PC-9 (cell line): ENCODE measurements at regions of chr2 and their contacts with region 1.

Region 1: GRCh38 chr2:174263989-174264388 is 15.7 kb upstream of the OLA1 start:
- DNase-seq: peak; percentile 52 to 92
- H3K4me3 ChIP-seq: no peak overlapping the region
- H3K27ac ChIP-seq: peak overlapping the region; percentile 80
- H3K4me1 ChIP-seq: peaks cover 18% of the 10 kb centered on the region
- H3K27me3 ChIP-seq: no peaks in the 10 kb centered on the region
- CTCF ChIP-seq: no peak

Region 2: DNA sequence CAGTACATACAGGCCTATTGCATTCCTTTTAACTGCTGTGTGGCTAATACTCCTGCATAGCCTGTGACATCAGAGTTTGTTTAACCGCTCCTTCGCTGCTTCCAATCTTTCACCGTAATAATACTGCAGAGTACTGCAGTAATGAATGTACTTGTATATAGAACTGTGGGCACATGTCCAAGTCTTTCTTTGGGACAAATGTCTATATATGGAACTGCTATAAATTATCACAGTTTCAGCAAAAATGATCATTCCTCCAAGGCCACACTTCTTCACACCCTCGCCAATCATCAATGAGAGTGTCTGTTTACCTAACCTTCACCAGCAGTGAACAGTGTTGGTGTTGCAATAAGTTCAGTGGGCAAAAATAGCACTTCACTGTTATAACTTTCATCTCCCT is 529.2 kb before region 1 on chr2:
- CTCF ChIA-PET with region 1: no interaction called
- POLR2A ChIA-PET with region 1: interaction called, 10 read pairs
- intact Hi-C with region 1: no loop called
- DNase-seq: no peak
- H3K4me3 ChIP-seq: no peak overlapping the region
- H3K27ac ChIP-seq: no peak overlapping the region
- H3K4me1 ChIP-seq: no peaks in the 10 kb centered on the region
- H3K27me3 ChIP-seq: peaks cover 9% of the 10 kb centered on the region; the same call in 1 of the 2 replicates
- CTCF ChIP-seq: no peak

Region 3: DNA sequence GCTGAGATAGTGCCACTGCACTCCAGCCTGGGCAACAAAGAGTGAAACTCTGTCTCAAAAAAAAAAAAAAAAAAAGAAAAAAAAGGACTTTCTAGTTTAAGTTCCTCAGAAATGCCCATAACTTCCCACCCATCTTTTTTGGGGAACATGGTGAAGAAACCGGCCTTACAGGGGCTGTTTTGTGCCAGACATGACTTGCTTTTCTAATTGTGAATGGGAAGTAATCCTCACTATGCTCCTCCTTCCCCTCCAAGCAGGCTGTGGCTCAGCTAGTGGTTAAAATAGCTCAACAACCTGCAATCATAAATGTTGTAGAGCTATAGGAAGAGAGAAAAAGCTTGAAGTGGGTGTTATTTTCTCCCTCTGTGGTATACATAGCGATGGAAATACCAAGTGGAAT is 18.5 kb after region 1 on chr2:
- CTCF ChIA-PET with region 1: no interaction called
- POLR2A ChIA-PET with region 1: no interaction called
- intact Hi-C with region 1: no loop called
- DNase-seq: peak in 1 of 2 experiments; percentile 0
- H3K4me3 ChIP-seq: no peak overlapping the region
- H3K27ac ChIP-seq: no peak overlapping the region
- H3K4me1 ChIP-seq: no peaks in the 10 kb centered on the region
- H3K27me3 ChIP-seq: no peaks in the 10 kb centered on the region
- CTCF ChIP-seq: no peak

Region 4: GRCh38 chr2:174336501-174337336 is 72.7 kb after region 1 on chr2:
- CTCF ChIA-PET with region 1: no interaction called
- POLR2A ChIA-PET with region 1: no interaction called
- intact Hi-C with region 1: no loop called
- DNase-seq: peak in 1 of 2 experiments; percentile 42
- H3K4me3 ChIP-seq: no peak overlapping the region
- H3K27ac ChIP-seq: no peak overlapping the region
- H3K4me1 ChIP-seq: no peaks in the 10 kb centered on the region
- H3K27me3 ChIP-seq: peaks cover under 1% of the 10 kb centered on the region; the same call in 1 of the 2 replicates
- CTCF ChIP-seq: no peak